Left cardiac atrium (tissue), 4 donors: ENCODE measurements at regions of chr18 and their contacts with region 1.

Region 1: GRCh38 chr18:51668101-51668500 is 470.6 kb upstream of the MEX3C start:
- DNase-seq: peak; percentile 46
- ATAC-seq: no peak

Region 2: DNA sequence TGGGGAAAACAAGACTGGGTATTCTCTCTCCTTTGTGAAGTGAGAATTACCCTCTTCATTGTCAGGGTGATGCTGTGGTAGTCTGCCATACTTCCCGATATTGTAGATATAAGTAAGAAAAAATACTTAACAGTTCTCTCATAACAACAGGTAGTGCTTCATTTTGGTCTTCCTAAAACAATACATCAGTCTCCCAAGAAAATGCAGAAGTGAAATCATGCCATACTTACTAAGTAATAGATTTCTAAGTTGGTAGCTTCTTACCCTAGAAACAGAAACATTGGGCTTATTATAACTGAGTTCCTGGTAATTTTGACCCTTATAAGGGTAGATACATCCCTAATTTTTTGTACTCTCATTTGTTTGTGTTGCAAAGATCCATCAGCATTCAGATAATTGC is 211.2 kb after region 1 on chr18:
- intact Hi-C with region 1: no loop called
- DNase-seq: no peak
- ATAC-seq: no peak

Region 3: GRCh38 chr18:52152036-52152435 is 483.9 kb after region 1 on chr18:
- intact Hi-C with region 1: no loop called
- DNase-seq: no peak
- ATAC-seq: no peak

Region 4: GRCh38 chr18:52200881-52201663 is 533.0 kb after region 1 on chr18:
- intact Hi-C with region 1: no loop called
- DNase-seq: no peak
- ATAC-seq: no peak

Region 5: DNA sequence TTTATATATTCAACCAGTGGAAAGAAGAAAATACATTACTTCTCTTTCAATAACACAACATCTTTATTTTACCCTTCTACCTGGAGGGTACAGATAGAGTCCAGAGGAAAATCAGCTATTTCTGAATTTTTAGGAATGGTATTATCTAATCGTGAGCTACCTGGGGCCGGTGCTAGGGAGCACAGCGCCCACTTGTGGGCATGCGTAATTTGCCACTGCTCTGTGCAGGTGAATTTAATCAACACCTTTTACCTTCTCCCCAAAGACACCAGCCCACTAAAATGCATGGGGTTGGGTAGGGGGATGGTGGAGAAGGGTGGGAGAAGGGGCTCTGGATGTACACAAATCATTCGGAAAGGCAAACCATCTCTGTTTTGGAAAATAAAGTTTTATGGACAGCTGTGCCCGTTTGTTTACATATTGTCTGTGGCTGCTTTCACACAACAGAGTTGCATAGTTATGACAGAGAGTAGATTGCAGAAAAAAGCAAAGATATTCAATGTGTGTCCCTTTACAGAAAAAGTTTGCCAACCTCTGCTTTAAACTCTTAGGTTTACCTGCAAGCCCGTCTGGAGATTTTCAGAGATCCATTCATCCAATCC is 620.4 kb after region 1 on chr18:
- intact Hi-C with region 1: loop called (anchors 5 kb)
- DNase-seq: no peak
- ATAC-seq: no peak